ENCODE measurements at regions of chr6 and their contacts with region 1.

Region 1: GRCh38 chr6:164693944-164694343 is 615.5 kb downstream of the C6orf118 start:
- DNase-seq: peak; percentile 21 to 87 (median 44)

Region 2: GRCh38 chr6:164507206-164507940 is 186.6 kb before region 1 on chr6:
- intact Hi-C with region 1: no loop called
- DNase-seq: no peak

Region 3: DNA sequence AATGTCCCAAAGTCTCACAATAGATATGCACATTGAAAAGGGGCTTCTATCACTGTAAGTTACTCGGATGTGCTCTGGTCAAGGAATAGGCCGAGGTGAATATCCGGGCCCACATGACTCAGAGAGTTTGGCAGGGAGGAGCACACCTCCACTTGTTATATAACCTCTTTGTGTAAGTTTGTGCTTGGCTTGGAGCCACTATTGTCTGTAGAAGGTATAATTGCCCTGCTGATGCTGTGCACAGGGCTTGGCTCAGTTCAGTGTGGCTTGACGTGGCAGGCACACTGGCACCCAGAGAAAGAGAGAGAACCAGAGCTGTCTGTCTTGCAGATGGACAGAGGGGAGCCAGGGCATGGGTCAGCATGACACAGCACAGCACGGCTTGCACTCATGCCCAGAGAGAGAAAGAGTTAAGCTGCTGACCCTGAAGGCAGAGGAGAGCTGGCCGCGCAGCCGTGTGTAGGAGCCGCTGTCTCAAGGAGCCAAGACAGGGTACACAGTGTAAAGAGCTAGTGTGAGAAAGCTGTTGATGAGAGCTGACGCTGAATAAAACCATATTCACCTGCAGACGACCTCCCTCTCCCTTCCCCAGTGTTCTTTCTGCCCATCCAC is 133.0 kb after region 1 on chr6:
- intact Hi-C with region 1: loop called (anchors 10 kb)
- DNase-seq: peak in 1 of 10 donors; percentile 6

Region 4: GRCh38 chr6:164911873-164912580 is 218.1 kb after region 1 on chr6:
- intact Hi-C with region 1: loop called (anchors 10 kb)
- DNase-seq: no peak

Region 5: DNA sequence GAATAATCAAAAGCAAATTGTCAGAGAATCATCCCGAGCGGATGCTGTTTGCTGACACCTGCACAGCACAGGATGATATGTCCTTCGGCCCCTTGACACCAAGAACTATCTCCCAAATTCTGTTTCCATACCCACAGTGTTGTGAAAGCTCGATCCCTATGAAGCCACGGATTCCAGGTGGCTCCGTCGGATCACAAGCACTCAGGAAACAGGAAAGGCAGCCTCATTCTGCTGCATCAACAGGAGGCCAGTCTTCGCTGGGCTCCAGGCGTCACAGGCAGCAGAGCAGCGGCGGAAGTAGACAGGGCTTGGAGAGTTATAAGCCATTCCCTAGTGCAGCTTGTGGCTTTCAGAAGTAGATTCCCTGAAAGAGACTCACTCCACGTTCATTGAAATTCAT is 273.2 kb after region 1 on chr6:
- intact Hi-C with region 1: no loop called
- DNase-seq: no peak

Region 6: DNA sequence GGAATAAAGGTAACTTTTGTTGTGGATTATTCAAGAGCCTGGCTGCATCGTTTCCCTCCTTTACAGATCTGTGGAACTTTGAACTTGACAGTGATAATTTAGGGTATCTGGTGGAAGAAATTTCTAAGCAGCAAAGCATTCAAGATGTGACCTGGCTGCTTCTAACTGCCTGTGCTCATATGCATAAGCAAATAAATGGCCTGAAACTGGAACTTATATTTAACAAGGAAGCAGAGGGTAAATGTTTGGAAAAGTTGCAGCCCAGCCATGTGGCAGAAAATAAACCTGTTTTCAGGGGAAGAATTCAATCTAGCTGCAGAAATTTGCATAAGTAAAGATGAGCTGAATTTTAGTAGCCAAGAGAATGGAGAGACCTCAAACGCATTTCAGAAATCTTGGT is 441.9 kb after region 1 on chr6:
- intact Hi-C with region 1: no loop called
- DNase-seq: no peak